PC-3 (cell line): ENCODE measurements at regions of chr21 and their contacts with region 1.

Region 1: DNA sequence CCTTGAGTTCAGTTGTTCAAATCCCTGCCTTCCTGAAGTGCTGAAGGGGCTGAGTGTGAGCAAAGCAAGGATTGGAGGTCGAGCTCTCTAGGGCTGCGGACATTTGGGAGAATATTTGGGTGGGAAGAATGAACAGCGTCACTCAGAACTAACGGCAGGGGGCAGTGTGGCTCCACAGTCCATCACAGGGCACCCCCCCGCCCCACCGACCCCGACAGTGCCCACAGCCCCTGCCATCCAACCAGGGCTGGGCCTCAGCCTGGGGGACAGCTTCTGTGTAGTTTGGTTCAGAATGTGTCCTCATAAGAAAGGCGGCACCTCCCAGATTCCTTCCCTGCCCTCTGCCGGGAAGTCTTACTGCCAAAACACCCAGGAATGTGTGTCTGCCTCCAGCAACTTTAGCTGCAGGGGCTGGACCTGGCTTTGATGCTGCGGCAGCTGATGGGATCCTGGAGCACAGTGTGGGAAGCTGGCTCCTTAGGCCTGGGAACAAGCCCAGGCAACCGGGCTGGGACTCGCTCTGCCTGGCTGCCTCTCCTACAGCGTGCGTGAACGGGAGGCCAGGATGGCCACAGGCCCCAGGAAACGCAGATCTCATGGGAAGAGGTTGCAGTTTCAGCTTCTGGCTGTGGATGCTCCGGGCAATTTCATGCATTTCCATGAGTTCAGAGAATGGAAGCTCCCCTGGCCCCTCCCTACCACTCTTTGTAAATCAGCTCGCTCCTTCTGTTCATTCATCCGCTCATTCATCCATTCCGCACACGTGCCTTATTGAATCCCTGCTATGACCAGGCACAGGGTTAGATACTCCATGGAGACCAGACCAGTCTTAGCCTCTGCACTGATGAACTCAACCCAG is 104.9 kb upstream of the TMPRSS2 start:
- DNase-seq: peak; percentile 93
- ATAC-seq: peak; percentile 70
- H3K4me3 ChIP-seq: peak overlapping the region; percentile 34; the same call in 1 of the 2 replicates
- H3K27ac ChIP-seq: peak overlapping the region; percentile 86
- H3K4me1 ChIP-seq: peaks cover 52% of the 10 kb centered on the region
- H3K27me3 ChIP-seq: no peaks in the 10 kb centered on the region
- CTCF ChIP-seq: peak; percentile 67

Region 2: DNA sequence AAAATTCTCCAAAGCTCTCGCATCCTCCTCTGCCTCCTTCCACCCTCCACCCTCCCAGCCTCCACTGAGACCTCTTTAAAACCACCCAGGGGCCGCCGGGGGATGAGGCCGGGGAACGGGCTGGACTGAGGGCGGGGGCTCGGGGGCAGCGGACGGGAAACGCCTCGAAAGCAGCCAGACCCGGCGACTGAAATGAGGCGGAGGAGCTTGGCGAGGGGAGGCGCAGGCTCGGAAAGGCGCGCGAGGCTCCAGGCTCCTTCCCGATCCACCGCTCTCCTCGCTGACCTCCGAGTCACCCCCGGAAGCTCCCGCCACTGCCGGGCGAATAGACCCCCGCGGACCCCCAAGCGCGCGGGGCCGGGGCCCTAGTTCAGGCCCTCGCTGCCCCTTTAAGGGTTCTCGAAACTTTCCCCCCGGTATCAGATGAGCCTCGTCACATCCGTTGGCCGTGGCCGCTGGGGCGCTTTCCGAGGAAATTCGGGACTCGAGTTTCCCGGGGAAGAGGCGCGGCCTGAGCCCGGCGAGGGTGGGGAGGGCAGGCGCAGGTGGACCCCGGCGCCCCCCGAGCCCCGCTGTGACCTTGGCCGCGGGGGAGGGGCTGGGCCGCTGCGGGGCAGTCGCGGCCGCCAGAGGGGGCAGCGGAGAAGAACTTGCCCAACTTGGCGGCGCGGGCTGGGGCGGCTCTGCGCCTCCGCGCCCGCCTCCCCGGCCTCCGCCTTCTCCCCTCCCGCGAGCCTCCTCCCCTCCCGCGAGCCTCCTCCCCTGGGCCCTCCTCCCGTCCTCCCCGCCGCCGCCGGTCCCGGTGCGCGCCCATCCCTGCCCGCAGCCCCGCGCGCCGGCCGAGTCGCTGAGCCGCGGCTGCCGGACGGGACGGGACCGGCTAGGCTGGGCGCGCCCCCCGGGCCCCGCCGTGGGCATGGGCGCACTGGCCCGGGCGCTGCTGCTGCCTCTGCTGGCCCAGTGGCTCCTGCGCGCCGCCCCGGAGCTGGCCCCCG is 445.3 kb before region 1 on chr21 and contains the start of gene BACE2:
- CTCF ChIA-PET with region 1: interaction called, 11 read pairs
- POLR2A ChIA-PET with region 1: no interaction called
- intact Hi-C with region 1: no loop called
- DNase-seq: peak; percentile 74
- ATAC-seq: peak; percentile 57
- H3K4me3 ChIP-seq: peak within 1 kb of the TSS; percentile 80
- H3K27ac ChIP-seq: peak within 1 kb of the TSS; percentile 55
- H3K4me1 ChIP-seq: peaks cover 51% of the 10 kb centered on the region
- H3K27me3 ChIP-seq: no peaks in the 10 kb centered on the region
- CTCF ChIP-seq: peak; percentile 64
- total RNA-seq, gene BACE2: 89.2 and 96.2 TPM in 2 replicates

Region 3: DNA sequence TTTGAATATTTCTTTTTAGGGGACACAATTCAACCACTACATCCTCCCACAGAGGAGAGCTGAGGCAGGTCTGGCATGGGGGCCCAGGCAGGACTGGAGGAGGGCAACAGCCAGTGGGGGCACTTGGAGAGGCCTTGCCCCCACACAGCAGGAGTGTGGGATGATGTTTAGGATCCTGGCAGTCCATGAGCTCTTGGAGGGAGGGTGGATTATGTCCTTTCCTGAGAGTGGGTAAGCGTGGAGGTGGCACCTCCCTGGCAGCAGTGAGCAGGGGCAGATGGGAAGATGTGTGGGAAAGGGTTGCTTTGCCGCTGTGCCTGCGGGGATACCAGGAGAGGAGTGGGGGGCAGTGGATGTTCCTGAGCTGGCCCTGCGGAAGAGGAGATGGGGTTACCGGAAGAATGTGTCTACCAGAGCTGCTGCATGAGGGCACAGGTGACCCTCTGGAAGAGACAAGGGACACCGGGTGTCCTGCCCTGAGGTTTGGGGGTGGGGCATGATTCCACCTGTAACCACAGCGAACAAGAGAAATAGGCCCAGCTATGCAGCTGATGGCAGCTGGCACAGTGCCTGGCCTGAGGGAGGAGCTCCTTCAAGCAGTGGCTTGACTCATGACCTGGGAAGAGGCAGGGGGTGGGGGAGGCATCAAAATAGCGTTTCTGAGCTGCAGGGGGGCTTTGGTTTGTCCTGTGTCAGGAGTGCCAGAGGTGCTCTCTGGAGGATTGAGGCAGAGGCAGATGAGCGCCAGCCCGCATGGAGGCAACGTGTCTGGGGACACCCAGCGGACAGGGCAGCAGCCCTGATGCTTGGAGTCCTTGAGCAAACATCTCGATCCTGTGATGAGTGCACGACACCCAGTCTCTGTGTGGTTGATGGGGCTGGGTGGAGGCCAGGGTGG is 18.9 kb after region 1 on chr21:
- CTCF ChIA-PET with region 1: interaction called, 11 read pairs
- POLR2A ChIA-PET with region 1: interaction called, 3 read pairs
- intact Hi-C with region 1: no loop called
- DNase-seq: peak; percentile 96
- ATAC-seq: peak; percentile 35
- H3K4me3 ChIP-seq: peak overlapping the region; percentile 22; the same call in 1 of the 2 replicates
- H3K27ac ChIP-seq: peak overlapping the region; percentile 99
- H3K4me1 ChIP-seq: peaks cover 75% of the 10 kb centered on the region
- H3K27me3 ChIP-seq: no peaks in the 10 kb centered on the region
- CTCF ChIP-seq: no peak

Region 4: GRCh38 chr21:41678944-41679343 is 66.0 kb after region 1 on chr21:
- CTCF ChIA-PET with region 1: interaction called, 12 read pairs
- POLR2A ChIA-PET with region 1: interaction called, 5 read pairs
- intact Hi-C with region 1: loop called (anchors 2 kb)
- DNase-seq: peak; percentile 99
- ATAC-seq: peak; percentile 75
- H3K4me3 ChIP-seq: peak overlapping the region; percentile 59
- H3K27ac ChIP-seq: peak overlapping the region; percentile 98
- H3K4me1 ChIP-seq: peaks cover 69% of the 10 kb centered on the region
- H3K27me3 ChIP-seq: no peaks in the 10 kb centered on the region
- CTCF ChIP-seq: no peak

Region 5: GRCh38 chr21:41768437-41769061 is 155.6 kb after region 1 on chr21:
- CTCF ChIA-PET with region 1: interaction called, 33 read pairs
- POLR2A ChIA-PET with region 1: interaction called, 6 read pairs
- intact Hi-C with region 1: loop called (anchors 2 kb)
- DNase-seq: peak; percentile 97
- ATAC-seq: peak; percentile 67
- H3K4me3 ChIP-seq: peak overlapping the region; percentile 94
- H3K27ac ChIP-seq: peak overlapping the region; percentile 97
- H3K4me1 ChIP-seq: peaks cover 29% of the 10 kb centered on the region
- H3K27me3 ChIP-seq: no peaks in the 10 kb centered on the region
- CTCF ChIP-seq: peak; percentile 75

Region 6: DNA sequence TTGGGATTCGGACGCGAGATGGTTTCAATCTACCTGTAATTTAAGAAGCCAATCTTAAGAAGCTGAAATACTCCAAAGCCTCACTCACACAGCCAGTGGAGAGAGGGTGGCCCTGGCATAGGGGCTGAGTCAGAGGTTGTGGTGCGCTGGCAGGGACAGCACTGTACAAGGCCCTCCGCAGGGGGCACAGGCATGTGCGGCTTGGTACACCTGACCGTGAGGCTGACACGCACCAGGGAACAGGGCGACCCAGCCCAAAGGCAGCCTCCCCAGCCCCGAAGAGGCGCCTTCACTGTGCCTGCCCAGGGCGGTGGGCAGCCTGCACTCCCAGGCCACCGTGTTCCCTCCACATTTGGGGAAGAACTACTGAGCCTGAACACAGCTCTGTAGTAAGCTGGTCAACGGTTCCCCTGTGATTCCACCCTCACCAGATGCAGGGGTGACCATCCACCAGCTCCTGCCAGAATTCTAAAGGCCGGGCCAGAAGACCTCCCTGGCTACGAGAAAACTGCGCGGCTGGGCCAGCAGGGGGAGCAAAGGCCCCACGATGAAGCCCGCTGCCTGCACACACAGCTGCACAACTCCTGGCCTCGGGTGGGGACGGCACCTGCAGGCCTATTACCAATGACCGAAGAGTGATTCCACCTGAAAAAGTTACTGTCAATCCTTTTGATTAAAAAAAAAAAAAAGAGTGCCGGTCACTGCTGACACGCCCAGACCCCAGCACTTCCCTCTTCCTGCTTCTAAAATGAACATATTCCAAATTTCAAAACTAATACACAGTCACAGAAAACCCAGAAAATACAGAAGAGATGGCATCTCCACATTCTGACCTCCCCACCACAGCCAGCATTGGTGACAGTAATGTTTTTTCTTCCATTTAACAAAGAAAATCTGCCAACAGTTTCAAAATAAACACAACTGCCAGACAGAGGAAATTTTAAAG is 203.6 kb after region 1 on chr21:
- CTCF ChIA-PET with region 1: interaction called, 48 read pairs
- POLR2A ChIA-PET with region 1: no interaction called
- intact Hi-C with region 1: loop called (anchors 1 kb)
- DNase-seq: peak; percentile 67
- ATAC-seq: peak; percentile 86
- H3K4me3 ChIP-seq: no peak overlapping the region
- H3K27ac ChIP-seq: peak overlapping the region; percentile 61
- H3K4me1 ChIP-seq: peaks cover 13% of the 10 kb centered on the region
- H3K27me3 ChIP-seq: no peaks in the 10 kb centered on the region
- CTCF ChIP-seq: peak; percentile 83